CD8-positive, alpha-beta T cell (primary cell): ENCODE measurements at regions of chr2 and their contacts with region 1.

Region 1: DNA sequence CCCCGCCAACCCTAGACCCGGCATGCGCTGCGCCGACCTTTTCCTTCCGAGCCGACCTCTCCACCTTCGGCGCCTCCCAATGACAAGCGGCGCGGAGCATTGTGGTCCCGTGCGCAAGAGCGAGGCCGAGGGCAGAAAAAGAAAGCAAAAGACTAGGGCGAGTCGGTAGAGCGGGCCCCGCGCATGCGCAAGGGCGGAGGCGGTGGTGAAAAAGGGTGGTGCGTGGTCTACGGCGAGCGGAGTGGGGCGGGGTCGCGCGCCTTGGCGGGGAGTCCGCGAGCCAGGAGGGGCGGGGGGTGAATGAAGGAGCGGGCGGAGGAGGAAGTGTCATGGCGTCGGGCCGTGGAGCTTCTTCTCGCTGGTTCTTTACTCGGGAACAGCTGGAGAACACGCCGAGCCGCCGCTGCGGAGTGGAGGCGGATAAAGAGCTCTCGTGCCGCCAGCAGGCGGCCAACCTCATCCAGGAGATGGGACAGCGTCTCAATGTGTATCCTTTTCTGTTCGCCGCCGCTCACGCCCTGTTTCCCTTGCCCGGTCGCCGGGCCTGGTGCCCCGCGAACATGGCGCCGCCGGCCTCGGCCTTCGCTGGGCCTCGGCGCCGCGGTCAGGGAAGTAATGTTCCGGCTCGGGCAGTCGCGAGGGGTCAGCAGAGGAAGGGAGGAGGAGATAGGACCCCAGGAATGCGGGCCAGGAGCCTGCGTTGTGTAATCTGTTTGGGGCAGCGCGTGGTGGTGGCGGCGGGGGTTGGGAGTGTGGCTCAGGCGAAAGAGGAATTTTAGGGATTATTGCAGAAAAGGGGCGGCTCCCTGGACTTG is at the start of gene CCNT2:
- DNase-seq: peak; percentile 99 to 100 (median 99)
- ATAC-seq: peak; percentile 85
- H3K4me3 ChIP-seq: peak within 1 kb of the TSS; percentile 91 to 96
- H3K4me3 Mint-ChIP-seq: peak within 1 kb of the TSS; percentile 92
- H3K27ac ChIP-seq: peak within 1 kb of the TSS; percentile 97
- H3K27ac Mint-ChIP-seq: peak within 1 kb of the TSS; percentile 97
- H3K4me1 ChIP-seq: peaks cover 44% of the 10 kb centered on the region
- H3K4me1 Mint-ChIP-seq: peaks cover 51% of the 10 kb centered on the region
- H3K27me3 ChIP-seq: no peaks in the 10 kb centered on the region
- H3K27me3 Mint-ChIP-seq: no peaks in the 10 kb centered on the region
- CTCF ChIP-seq: no peak
- total RNA-seq, gene CCNT2: 67.0 to 71.9 TPM

Region 2: GRCh38 chr2:134668821-134669220 is 249.9 kb before region 1 on chr2:
- CTCF ChIA-PET with region 1: no interaction called
- POLR2A ChIA-PET with region 1: no interaction called
- intact Hi-C with region 1: loop called in 1 of 2 experiments (anchors 2 kb)
- DNase-seq: peak; percentile 50 to 95 (median 78)
- ATAC-seq: peak; percentile 73
- H3K4me3 ChIP-seq: peak overlapping the region; percentile 0 to 10
- H3K4me3 Mint-ChIP-seq: peak overlapping the region; percentile 42
- H3K27ac ChIP-seq: peak overlapping the region in 1 of 2 experiments; percentile 83
- H3K27ac Mint-ChIP-seq: peak overlapping the region; percentile 82
- H3K4me1 ChIP-seq: peaks cover 60% of the 10 kb centered on the region
- H3K4me1 Mint-ChIP-seq: peaks cover 82% of the 10 kb centered on the region
- H3K27me3 ChIP-seq: no peaks in the 10 kb centered on the region
- H3K27me3 Mint-ChIP-seq: peaks cover 20% of the 10 kb centered on the region
- CTCF ChIP-seq: no peak

Region 3: GRCh38 chr2:135052042-135052876 is 133.5 kb after region 1 on chr2 and contains the start of gene RAB3GAP1:
- CTCF ChIA-PET with region 1: no interaction called
- POLR2A ChIA-PET with region 1: interaction called, 7 read pairs
- intact Hi-C with region 1: loop called (anchors 1 kb)
- DNase-seq: peak; percentile 80 to 97 (median 91)
- ATAC-seq: peak; percentile 80
- H3K4me3 ChIP-seq: peak within 1 kb of the TSS; percentile 79 to 80
- H3K4me3 Mint-ChIP-seq: peak within 1 kb of the TSS; percentile 92
- H3K27ac ChIP-seq: peak within 1 kb of the TSS; percentile 96
- H3K27ac Mint-ChIP-seq: peak within 1 kb of the TSS; percentile 99
- H3K4me1 ChIP-seq: peaks cover 11% of the 10 kb centered on the region
- H3K4me1 Mint-ChIP-seq: peaks cover 42% of the 10 kb centered on the region
- H3K27me3 ChIP-seq: peaks cover 0 to 3% of the 10 kb centered on the region in 2 experiments
- H3K27me3 Mint-ChIP-seq: no peaks in the 10 kb centered on the region
- CTCF ChIP-seq: no peak
- total RNA-seq, gene RAB3GAP1: 31.0 to 32.8 TPM

Region 4: DNA sequence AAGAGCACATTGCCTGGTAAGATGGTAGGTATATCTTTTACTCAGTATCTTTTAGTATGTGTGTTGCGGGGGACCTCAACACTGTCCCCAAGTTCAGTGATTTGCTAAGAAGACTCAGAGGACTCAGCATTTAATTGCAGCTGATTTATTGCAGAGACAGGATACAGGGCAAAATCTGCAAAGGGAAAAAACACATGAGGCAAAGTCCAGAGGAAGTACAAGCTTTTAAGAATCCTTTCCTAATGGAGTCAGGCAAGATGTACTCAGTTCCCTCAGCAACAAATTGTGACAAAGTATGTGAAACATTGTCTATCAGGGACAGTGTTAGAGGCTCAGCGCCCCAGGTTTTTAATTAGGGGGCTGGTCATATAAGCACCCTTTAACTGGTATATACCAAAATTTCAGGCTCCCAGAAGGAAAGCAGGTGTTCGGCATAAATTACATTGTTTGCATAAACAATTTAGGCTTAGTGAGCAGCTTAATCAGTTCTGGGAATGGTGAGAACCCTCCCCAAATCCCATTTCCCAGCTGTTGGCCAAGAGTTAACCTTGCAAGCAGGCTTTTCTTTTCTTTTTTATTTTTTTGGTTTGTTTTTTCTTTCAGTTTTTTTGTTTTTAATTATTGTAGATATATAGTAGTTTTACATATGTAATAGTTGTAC is 175.1 kb after region 1 on chr2:
- CTCF ChIA-PET with region 1: no interaction called
- POLR2A ChIA-PET with region 1: no interaction called
- intact Hi-C with region 1: no loop called
- DNase-seq: no peak
- ATAC-seq: no peak
- H3K4me3 ChIP-seq: no peak overlapping the region
- H3K4me3 Mint-ChIP-seq: no peak overlapping the region
- H3K27ac ChIP-seq: no peak overlapping the region
- H3K27ac Mint-ChIP-seq: no peak overlapping the region
- H3K4me1 ChIP-seq: no peaks in the 10 kb centered on the region
- H3K4me1 Mint-ChIP-seq: peaks cover 2% of the 10 kb centered on the region
- H3K27me3 ChIP-seq: no peaks in the 10 kb centered on the region
- H3K27me3 Mint-ChIP-seq: no peaks in the 10 kb centered on the region
- CTCF ChIP-seq: no peak

Region 5: GRCh38 chr2:135657806-135658582 is 739.3 kb after region 1 on chr2:
- CTCF ChIA-PET with region 1: no interaction called
- POLR2A ChIA-PET with region 1: no interaction called
- intact Hi-C with region 1: loop called in 1 of 2 experiments (anchors 5 kb)
- DNase-seq: peak; percentile 35 to 86 (median 73)
- ATAC-seq: peak; percentile 92
- H3K4me3 ChIP-seq: peak overlapping the region; percentile 21 to 52
- H3K4me3 Mint-ChIP-seq: peak overlapping the region; percentile 85
- H3K27ac ChIP-seq: peak overlapping the region; percentile 41 to 80
- H3K27ac Mint-ChIP-seq: peak overlapping the region; percentile 99
- H3K4me1 ChIP-seq: peaks cover 16% of the 10 kb centered on the region
- H3K4me1 Mint-ChIP-seq: peaks cover 19% of the 10 kb centered on the region
- H3K27me3 ChIP-seq: no peaks in the 10 kb centered on the region
- H3K27me3 Mint-ChIP-seq: no peaks in the 10 kb centered on the region
- CTCF ChIP-seq: no peak

Region 6: DNA sequence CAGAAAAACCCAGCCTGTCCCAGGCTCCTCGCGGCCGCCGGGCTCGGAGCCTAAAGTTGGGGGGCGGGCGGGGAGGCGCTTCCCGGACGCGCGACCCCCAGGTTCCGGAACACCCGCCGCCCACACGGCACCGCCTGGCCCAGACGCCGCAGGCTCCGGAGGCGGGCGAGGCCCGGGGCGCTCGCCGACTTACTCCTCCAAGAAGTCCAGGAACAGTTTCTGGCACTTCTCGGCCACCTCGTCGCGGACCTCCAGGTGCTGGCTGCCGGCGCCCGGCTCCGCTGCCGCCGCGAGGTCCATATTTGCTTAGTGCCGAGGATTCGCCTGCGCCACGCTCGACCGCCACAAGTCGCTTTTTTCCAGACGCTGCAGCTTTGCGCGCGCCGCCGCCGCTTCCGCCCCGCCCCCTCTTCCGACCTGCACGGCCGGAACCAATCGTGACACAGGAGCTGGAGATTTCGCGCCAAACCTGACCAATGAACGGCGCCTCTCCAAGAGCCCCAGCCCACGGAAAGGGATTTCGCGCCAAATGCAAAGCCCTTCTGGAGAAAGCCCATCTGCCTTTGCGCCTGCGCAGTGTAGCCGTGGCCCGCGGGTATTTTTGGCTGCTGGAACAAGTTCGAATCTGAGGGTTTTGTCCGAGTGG is 957.5 kb after region 1 on chr2 and contains the start of gene MCM6:
- CTCF ChIA-PET with region 1: no interaction called
- POLR2A ChIA-PET with region 1: interaction called, 13 read pairs
- intact Hi-C with region 1: loop called in 1 of 2 experiments (anchors 2 kb)
- DNase-seq: peak; percentile 95 to 99 (median 97)
- ATAC-seq: peak; percentile 89
- H3K4me3 ChIP-seq: peak within 1 kb of the TSS; percentile 81 to 82
- H3K4me3 Mint-ChIP-seq: peak within 1 kb of the TSS; percentile 92
- H3K27ac ChIP-seq: peak within 1 kb of the TSS; percentile 85 to 96
- H3K27ac Mint-ChIP-seq: peak within 1 kb of the TSS; percentile 97
- H3K4me1 ChIP-seq: peaks cover 18% of the 10 kb centered on the region
- H3K4me1 Mint-ChIP-seq: peaks cover 37% of the 10 kb centered on the region
- H3K27me3 ChIP-seq: no peaks in the 10 kb centered on the region
- H3K27me3 Mint-ChIP-seq: no peaks in the 10 kb centered on the region
- CTCF ChIP-seq: no peak
- total RNA-seq, gene MCM6: 37.3 to 38.8 TPM